Activated CD4-positive, alpha-beta T cell treated with anti-CD3 and anti-CD28 coated beads, Interleukin-2, amount 10 ng/mL, durations not matched to agents 24 days and 14 days (primary cell): ENCODE measurements at regions of chr1 and their contacts with region 1.

Region 1: GRCh38 chr1:183956559-183957188 is 80.9 kb downstream of the COLGALT2 start:
- DNase-seq: peak; percentile 91
- H3K4me3 Mint-ChIP-seq: peak overlapping the region; percentile 58
- H3K27ac Mint-ChIP-seq: no peak overlapping the region
- H3K4me1 Mint-ChIP-seq: peaks cover 21% of the 10 kb centered on the region
- H3K27me3 Mint-ChIP-seq: no peaks in the 10 kb centered on the region

Region 2: GRCh38 chr1:182768963-182769362 is 1187.7 kb before region 1 on chr1:
- intact Hi-C with region 1: no loop called
- DNase-seq: no peak
- H3K4me3 Mint-ChIP-seq: no peak overlapping the region
- H3K27ac Mint-ChIP-seq: no peak overlapping the region
- H3K4me1 Mint-ChIP-seq: no peaks in the 10 kb centered on the region
- H3K27me3 Mint-ChIP-seq: peaks cover 21% of the 10 kb centered on the region

Region 3: GRCh38 chr1:183580281-183580682 is 376.4 kb before region 1 on chr1:
- intact Hi-C with region 1: no loop called
- DNase-seq: peak; percentile 77
- H3K4me3 Mint-ChIP-seq: peak overlapping the region; percentile 61
- H3K27ac Mint-ChIP-seq: peak overlapping the region; percentile 84
- H3K4me1 Mint-ChIP-seq: peaks cover 28% of the 10 kb centered on the region
- H3K27me3 Mint-ChIP-seq: no peaks in the 10 kb centered on the region

Region 4: GRCh38 chr1:183655562-183656075 is 301.1 kb before region 1 on chr1:
- intact Hi-C with region 1: loop called (anchors 2 kb)
- DNase-seq: peak; percentile 92
- H3K4me3 Mint-ChIP-seq: no peak overlapping the region
- H3K27ac Mint-ChIP-seq: peak overlapping the region; percentile 30
- H3K4me1 Mint-ChIP-seq: peaks cover 35% of the 10 kb centered on the region
- H3K27me3 Mint-ChIP-seq: peaks cover 4% of the 10 kb centered on the region

Region 5: GRCh38 chr1:183989078-183989577 is 32.5 kb after region 1 on chr1:
- intact Hi-C with region 1: loop called (anchors 1 kb)
- DNase-seq: peak; percentile 59
- H3K4me3 Mint-ChIP-seq: no peak overlapping the region
- H3K27ac Mint-ChIP-seq: peak overlapping the region; percentile 77
- H3K4me1 Mint-ChIP-seq: peaks cover 14% of the 10 kb centered on the region
- H3K27me3 Mint-ChIP-seq: no peaks in the 10 kb centered on the region

Region 6: GRCh38 chr1:184051485-184052193 is 95.0 kb after region 1 on chr1 and contains the start of gene TSEN15:
- intact Hi-C with region 1: loop called (anchors 1 kb)
- DNase-seq: peak; percentile 93
- H3K4me3 Mint-ChIP-seq: peak within 1 kb of the TSS; percentile 96
- H3K27ac Mint-ChIP-seq: peak within 1 kb of the TSS; percentile 98
- H3K4me1 Mint-ChIP-seq: peaks cover 30% of the 10 kb centered on the region
- H3K27me3 Mint-ChIP-seq: peaks cover 25% of the 10 kb centered on the region
- total RNA-seq, gene TSEN15: 44.9 and 48.3 TPM in 2 replicates

Region 7: DNA sequence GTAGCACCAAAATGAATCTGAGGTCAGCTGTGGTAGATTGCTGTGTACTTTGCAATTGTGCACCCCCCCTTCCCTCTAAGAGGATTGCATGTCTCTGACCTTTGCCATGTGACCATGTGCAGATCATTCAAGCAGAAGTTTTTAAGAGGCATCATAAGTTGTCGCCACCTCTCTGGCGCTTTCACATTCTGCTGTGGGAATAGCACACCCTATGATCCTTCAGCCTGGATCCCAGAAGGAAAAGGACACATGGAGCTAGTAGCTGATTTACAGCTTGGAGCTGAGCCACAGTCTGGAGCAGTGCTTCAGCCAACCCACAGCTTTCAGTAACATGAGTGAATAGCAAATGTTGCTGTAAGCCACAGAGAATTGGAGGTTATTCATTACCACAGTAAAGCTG is 253.4 kb after region 1 on chr1:
- intact Hi-C with region 1: no loop called
- DNase-seq: no peak
- H3K4me3 Mint-ChIP-seq: no peak overlapping the region
- H3K27ac Mint-ChIP-seq: no peak overlapping the region
- H3K4me1 Mint-ChIP-seq: no peaks in the 10 kb centered on the region
- H3K27me3 Mint-ChIP-seq: peaks cover 16% of the 10 kb centered on the region

Region 8: GRCh38 chr1:184494929-184495328 is 538.3 kb after region 1 on chr1:
- intact Hi-C with region 1: loop called (anchors 5 kb)
- DNase-seq: no peak
- H3K4me3 Mint-ChIP-seq: no peak overlapping the region
- H3K27ac Mint-ChIP-seq: no peak overlapping the region
- H3K4me1 Mint-ChIP-seq: peaks cover 16% of the 10 kb centered on the region
- H3K27me3 Mint-ChIP-seq: peaks cover 5% of the 10 kb centered on the region